Activated naive CD4-positive, alpha-beta T cell treated with anti-CD3 and anti-CD28 coated beads, Interleukin-2, amount 10 ng/mL, durations not matched to agents 7 days and 5 days (primary cell): ENCODE measurements at regions of chr9 and their contacts with region 1.

Region 1: GRCh38 chr9:97921959-97922724 is at the start of gene TRMO:
- DNase-seq: peak; percentile 98
- H3K4me3 Mint-ChIP-seq: peak within 1 kb of the TSS; percentile 82
- H3K27ac Mint-ChIP-seq: peak within 1 kb of the TSS; percentile 96
- H3K4me1 Mint-ChIP-seq: peaks cover 52% of the 10 kb centered on the region
- H3K27me3 Mint-ChIP-seq: peaks cover 5% of the 10 kb centered on the region

Region 2: DNA sequence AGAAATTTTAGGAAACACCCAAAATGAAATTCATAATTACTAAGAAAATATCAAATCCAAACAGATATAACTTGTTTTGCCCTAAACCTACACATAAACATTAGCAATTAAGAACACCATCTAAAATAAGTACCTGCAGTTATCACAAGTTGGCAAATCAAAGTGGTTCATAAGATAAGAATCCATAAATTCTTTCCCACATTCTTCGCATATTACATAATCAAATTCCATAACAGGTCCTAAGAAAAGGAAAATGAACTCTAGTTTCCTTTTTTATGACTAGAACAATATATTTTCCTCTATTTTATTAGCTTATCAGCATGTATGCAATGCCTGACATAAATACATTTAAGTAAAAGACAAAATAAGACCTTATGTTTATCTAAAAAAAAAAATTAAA is 232.7 kb before region 1 on chr9:
- CTCF ChIA-PET with region 1: no interaction called
- DNase-seq: no peak
- H3K4me3 Mint-ChIP-seq: no peak overlapping the region
- H3K27ac Mint-ChIP-seq: no peak overlapping the region
- H3K4me1 Mint-ChIP-seq: peaks cover 12% of the 10 kb centered on the region
- H3K27me3 Mint-ChIP-seq: no peaks in the 10 kb centered on the region

Region 3: GRCh38 chr9:97890038-97890437 is 32.1 kb before region 1 on chr9:
- CTCF ChIA-PET with region 1: interaction called, 41 read pairs
- DNase-seq: peak; percentile 81
- H3K4me3 Mint-ChIP-seq: no peak overlapping the region
- H3K27ac Mint-ChIP-seq: no peak overlapping the region
- H3K4me1 Mint-ChIP-seq: peaks cover 10% of the 10 kb centered on the region
- H3K27me3 Mint-ChIP-seq: peaks cover 5% of the 10 kb centered on the region

Region 4: DNA sequence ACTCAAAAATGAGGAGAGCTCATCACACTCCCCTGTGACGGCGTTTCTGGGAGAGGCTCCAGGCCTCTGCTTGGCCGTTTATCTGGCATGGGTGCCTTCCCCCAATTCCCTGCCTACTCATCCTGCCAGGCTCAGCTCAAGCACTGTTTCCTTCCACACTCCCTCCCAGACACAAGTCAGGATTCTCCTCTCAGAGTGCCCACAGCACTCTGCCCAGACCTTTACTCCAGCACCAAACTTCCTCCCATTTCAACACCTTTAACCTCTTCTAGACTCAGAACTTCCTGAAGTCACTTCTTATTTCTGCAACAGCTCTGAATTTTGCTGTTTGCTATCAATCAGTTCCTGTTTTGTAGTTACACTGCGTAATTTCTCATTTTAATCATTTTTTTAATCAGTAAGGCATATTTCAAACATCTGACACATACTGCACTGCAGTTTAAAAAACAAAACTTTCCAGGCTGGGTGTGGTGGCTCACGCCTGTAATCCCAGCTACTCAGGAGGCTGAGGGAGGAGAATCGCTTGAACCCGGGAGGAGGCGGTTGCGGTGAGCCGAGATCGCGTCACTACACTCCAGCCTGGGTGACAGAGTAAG is 15.8 kb before region 1 on chr9:
- CTCF ChIA-PET with region 1: interaction called, 51 read pairs
- DNase-seq: peak; percentile 64
- H3K4me3 Mint-ChIP-seq: peak overlapping the region; percentile 73
- H3K27ac Mint-ChIP-seq: peak overlapping the region; percentile 99
- H3K4me1 Mint-ChIP-seq: peaks cover 91% of the 10 kb centered on the region
- H3K27me3 Mint-ChIP-seq: no peaks in the 10 kb centered on the region

Region 5: DNA sequence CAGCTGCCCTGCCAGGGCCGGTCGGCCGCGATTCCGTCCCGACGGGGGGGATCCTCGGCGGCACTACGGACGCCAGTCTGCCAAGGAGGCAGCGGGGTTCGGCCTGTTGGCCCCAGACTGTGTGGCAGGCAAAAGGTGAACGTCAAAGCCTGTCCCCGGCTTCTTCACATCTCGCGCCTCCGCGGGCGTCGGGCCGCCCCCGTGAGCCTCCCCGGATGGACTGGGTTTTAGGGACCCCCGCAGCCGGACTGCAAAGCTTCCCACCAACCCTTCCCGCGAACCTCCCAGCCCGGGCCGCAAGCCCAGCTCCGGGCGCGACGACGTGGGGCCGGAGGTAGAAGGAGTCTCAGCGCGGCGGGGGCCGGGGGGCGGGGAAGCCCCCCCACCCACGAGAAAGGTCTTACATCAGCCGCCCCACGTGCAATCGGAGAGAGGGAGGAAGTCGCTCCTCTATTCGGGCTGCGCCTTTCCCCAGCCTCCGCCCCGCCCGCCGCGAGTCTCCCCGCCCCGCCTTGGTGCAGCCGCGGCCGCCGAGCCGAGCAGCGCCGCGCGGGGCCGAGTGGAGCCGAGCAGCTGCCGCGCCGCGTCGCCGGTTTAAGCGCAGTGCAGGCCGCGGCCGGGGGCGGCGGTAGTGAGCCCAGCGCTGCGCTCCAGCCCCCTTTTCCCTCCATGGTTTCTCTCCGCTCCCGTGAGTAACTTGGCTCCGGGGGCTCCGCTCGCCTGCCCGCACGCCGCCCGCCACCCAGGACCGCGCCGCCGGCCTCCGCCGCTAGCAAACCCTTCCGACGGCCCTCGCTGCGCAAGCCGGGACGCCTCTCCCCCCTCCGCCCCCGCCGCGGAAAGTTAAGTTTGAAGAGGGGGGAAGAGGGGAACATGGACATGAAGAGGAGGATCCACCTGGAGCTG is 60.8 kb after region 1 on chr9 and contains the start of gene ANP32B:
- CTCF ChIA-PET with region 1: interaction called, 46 read pairs
- DNase-seq: peak; percentile 96
- H3K4me3 Mint-ChIP-seq: peak within 1 kb of the TSS; percentile 85
- H3K27ac Mint-ChIP-seq: peak within 1 kb of the TSS; percentile 95
- H3K4me1 Mint-ChIP-seq: peaks cover 55% of the 10 kb centered on the region
- H3K27me3 Mint-ChIP-seq: no peaks in the 10 kb centered on the region

Region 6: GRCh38 chr9:98018347-98018746 is 96.2 kb after region 1 on chr9:
- CTCF ChIA-PET with region 1: interaction called, 13 read pairs
- DNase-seq: no peak
- H3K4me3 Mint-ChIP-seq: no peak overlapping the region
- H3K27ac Mint-ChIP-seq: no peak overlapping the region
- H3K4me1 Mint-ChIP-seq: no peaks in the 10 kb centered on the region
- H3K27me3 Mint-ChIP-seq: no peaks in the 10 kb centered on the region

Region 7: DNA sequence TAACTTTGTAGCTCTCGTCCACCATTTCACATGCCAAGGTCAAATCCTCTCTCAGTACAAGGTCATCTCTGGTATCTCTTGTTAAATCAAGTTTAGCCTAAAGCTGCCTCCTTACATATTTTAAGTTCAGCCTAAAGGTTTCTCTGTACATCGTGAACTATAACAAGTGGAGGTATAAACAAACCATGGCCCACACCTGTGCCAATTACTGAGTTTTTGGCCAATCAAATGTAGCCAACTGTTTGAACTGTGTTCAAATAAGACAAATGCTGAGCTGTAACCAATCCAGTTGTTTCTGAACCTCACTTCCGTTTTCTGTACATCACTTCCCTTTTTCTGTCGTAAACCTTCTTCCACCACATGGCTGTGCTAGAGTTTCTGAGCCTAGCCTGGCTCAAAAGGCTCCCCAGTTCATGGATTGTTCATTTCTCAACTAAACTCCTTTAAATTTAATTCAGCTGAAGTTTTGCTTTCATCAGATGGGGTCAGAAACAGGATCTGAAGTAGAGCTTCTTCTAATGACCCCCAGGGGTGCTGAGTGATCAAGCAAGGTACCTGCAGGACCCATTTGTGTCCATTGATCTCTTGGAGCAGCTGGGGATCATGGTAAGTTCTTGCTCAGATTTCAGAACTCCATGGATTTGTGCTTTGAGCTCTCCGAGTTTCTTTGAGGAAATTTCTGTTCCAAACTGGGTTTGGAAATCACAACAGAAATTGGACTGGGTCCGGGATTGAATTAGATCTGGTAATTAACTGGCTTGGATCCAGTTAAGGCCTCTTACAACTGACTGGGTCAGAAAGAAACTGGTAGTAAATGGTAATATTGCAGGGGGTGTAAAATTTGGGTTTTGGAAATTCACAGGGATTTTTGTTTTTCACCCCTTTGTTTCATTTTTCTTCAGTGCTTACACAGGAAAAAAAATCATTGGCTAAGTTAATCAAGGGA is 123.4 kb after region 1 on chr9:
- CTCF ChIA-PET with region 1: interaction called, 13 read pairs
- DNase-seq: peak; percentile 52
- H3K4me3 Mint-ChIP-seq: peak overlapping the region; percentile 80
- H3K27ac Mint-ChIP-seq: peak overlapping the region; percentile 92
- H3K4me1 Mint-ChIP-seq: peaks cover 55% of the 10 kb centered on the region
- H3K27me3 Mint-ChIP-seq: peaks cover 6% of the 10 kb centered on the region

Region 8: DNA sequence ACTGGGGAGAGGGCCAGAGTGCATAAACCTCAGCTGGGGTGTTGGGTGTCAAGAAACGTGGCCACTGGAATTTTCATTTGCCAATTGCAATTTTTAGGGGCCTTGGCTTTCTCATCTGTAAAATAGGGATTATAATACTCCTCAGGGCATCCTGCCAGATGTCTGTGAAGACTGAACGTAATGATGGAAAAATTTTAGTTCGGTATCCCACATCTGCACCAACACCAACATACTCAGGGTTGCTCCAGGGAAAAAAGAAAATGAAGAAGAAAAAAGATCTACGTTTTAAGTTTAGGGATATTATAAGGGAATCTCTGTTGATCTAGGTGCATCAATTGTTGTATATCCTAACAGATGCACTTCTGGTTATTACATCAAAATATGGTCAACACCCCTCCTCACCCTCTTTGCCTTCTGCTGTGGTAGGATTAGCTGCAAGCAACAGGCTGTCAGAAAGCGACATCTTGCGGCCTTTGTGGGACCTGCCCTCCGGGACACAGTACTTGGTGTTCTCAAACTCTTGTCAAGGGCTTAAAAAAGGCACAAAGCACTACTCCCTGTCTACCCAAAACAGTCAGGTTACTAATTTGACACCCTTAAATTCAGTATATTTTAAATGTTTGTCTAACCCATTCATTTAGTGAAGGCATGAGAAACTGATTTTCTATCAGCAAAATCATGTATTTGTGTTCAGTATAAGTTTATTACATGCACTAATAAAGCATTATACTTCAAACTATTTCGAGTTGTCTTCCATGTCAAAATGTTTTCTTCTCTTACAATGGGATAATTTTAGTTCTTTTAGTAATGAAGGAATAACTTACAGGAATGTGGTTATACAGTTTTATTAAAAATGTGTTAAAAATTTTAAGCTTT is 341.6 kb after region 1 on chr9:
- CTCF ChIA-PET with region 1: interaction called, 11 read pairs
- DNase-seq: peak; percentile 93
- H3K4me3 Mint-ChIP-seq: no peak overlapping the region
- H3K27ac Mint-ChIP-seq: no peak overlapping the region
- H3K4me1 Mint-ChIP-seq: peaks cover 2% of the 10 kb centered on the region
- H3K27me3 Mint-ChIP-seq: peaks cover 8% of the 10 kb centered on the region